ENCODE measurements at regions of chr3 and their contacts with region 1.

Region 1: GRCh38 chr3:12541631-12542030 is 3.7 kb downstream of the MKRN2OS start:
- DNase-seq: no peak
- H3K4me3 ChIP-seq: no peak overlapping the region
- H3K27ac ChIP-seq: no peak overlapping the region
- H3K4me1 ChIP-seq: peaks cover 0 to 4% (median 3%) of the 10 kb centered on the region in 4 experiments; a peak in 2 of 7 replicates
- H3K27me3 ChIP-seq: no peaks in the 10 kb centered on the region
- CTCF ChIP-seq: peak; percentile 32 to 73 (median 65)
- EP300 ChIP-seq: no peak
- POLR2A ChIP-seq: no peak
- RAD21 ChIP-seq: peak; percentile 28 to 35; a peak in 2 of 4 replicates

Region 2: DNA sequence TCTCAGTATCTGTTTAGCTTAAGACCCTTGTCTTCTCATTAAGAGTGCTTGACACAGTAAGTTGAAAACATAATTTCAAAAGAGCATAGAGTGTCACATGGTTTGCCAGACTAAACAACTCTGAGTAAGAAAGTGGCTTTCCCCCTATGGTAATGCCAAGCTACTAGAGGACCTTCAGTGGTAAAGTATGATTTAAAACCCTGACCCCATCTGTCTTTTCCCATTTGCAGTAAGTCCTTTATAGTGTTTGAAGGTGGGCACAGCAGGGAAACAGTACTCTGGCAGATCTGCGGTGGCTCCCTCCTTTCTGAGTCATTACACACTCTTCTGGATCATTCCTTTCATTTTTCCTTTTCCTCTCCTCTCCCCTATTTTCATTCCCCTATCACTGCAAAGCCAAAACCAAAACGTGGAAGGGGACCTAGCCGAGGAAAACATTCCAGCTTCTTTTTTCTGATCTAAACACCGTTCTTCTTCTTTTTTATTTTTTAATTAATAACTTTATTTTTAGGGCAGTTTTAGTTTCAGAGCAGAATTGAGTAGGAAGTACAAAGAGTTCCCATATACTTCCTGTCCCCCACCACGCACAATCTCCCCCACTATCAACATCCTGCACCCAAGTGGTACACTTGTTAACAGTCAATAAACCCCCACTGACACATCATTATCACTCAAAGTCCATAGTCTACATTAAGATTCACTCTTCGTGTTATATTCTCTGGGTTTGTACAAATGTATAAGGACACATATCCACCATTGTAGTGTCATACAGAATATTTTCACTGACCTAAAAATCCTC is 178.0 kb before region 1 on chr3:
- CTCF ChIA-PET with region 1: no interaction called
- POLR2A ChIA-PET with region 1: no interaction called
- DNase-seq: no peak
- H3K4me3 ChIP-seq: no peak overlapping the region
- H3K27ac ChIP-seq: no peak overlapping the region
- H3K4me1 ChIP-seq: no peaks in the 10 kb centered on the region
- H3K27me3 ChIP-seq: no peaks in the 10 kb centered on the region
- CTCF ChIP-seq: no peak
- EP300 ChIP-seq: no peak
- POLR2A ChIP-seq: no peak
- RAD21 ChIP-seq: no peak

Region 3: GRCh38 chr3:12556671-12557472 is 15.2 kb after region 1 on chr3 and contains the start of gene MKRN2:
- CTCF ChIA-PET with region 1: interaction called, 12 read pairs
- POLR2A ChIA-PET with region 1: interaction called, 21 read pairs
- DNase-seq: peak; percentile 70 to 97
- H3K4me3 ChIP-seq: peak within 1 kb of the TSS; percentile 78 to 95 (median 85)
- H3K27ac ChIP-seq: peak within 1 kb of the TSS; percentile 92
- H3K4me1 ChIP-seq: peaks cover 0 to 7% (median 2%) of the 10 kb centered on the region in 4 experiments; a peak in 2 of 7 replicates
- H3K27me3 ChIP-seq: no peaks in the 10 kb centered on the region
- CTCF ChIP-seq: no peak
- EP300 ChIP-seq: peak; percentile 22 to 89; a peak in 2 of 3 replicates
- POLR2A ChIP-seq: peak; percentile 93 to 98
- RAD21 ChIP-seq: peak in 1 of 2 experiments; percentile 1; a peak in 1 of 4 replicates
- total RNA-seq, gene MKRN2: 17.6 and 17.8 TPM in 2 replicates

Region 4: GRCh38 chr3:12578742-12579141 is 37.1 kb after region 1 on chr3:
- CTCF ChIA-PET with region 1: interaction called, 10 read pairs
- POLR2A ChIA-PET with region 1: interaction called, 4 read pairs
- DNase-seq: no peak
- H3K4me3 ChIP-seq: no peak overlapping the region
- H3K27ac ChIP-seq: no peak overlapping the region
- H3K4me1 ChIP-seq: no peaks in the 10 kb centered on the region
- H3K27me3 ChIP-seq: no peaks in the 10 kb centered on the region
- CTCF ChIP-seq: 0 out of 4 replicates have a peak, but pooled peaks of 1 of the 3 experiments have one; percentile 7
- EP300 ChIP-seq: no peak
- POLR2A ChIP-seq: no peak
- RAD21 ChIP-seq: no peak

Measured in H1 (cell line).